ENCODE measurements at regions of chr12 and their contacts with region 1.

Region 1: DNA sequence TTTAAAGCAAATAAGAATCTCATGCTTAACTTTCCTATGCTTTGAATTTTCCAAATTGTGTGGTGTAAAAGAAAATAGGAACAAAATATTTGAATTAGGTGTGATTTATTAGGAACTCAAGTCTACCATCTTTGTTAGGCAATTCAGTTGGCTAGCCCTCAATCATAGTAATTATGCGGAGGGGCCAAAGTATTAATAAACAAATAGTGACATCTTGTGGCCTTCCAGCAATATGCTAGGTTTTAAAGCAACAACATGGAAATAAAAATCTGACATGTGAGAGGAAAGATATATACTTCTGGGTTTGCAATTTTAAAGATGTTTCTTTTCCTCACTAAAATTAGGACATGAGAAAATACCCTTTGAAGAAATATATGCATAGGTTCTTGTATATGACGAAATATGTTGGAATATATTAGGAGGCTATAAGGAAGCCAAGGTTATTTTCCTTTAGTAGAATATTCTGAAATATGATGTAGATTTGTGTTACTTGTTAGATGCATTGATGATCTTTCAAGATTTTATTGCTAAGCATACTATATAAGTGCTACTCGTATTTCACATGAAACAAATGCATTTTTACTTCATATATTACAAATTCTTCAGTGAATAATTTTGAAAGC is 200.4 kb downstream of the PTPRO start:
- DNase-seq: no peak
- ATAC-seq: no peak
- H3K4me3 Mint-ChIP-seq: no peak overlapping the region
- H3K27ac Mint-ChIP-seq: no peak overlapping the region
- H3K4me1 Mint-ChIP-seq: peaks cover 6% of the 10 kb centered on the region
- H3K27me3 Mint-ChIP-seq: peaks cover 26% of the 10 kb centered on the region

Region 2: GRCh38 chr12:15276088-15276698 is 246.5 kb before region 1 on chr12:
- CTCF ChIA-PET with region 1: interaction called, 19 read pairs
- POLR2A ChIA-PET with region 1: no interaction called
- DNase-seq: no peak
- ATAC-seq: no peak
- H3K4me3 Mint-ChIP-seq: no peak overlapping the region
- H3K27ac Mint-ChIP-seq: no peak overlapping the region
- H3K4me1 Mint-ChIP-seq: peaks cover 12% of the 10 kb centered on the region
- H3K27me3 Mint-ChIP-seq: peaks cover 9% of the 10 kb centered on the region

Region 3: GRCh38 chr12:15423629-15424028 is 99.0 kb before region 1 on chr12:
- CTCF ChIA-PET with region 1: no interaction called
- POLR2A ChIA-PET with region 1: no interaction called
- DNase-seq: no peak
- ATAC-seq: no peak
- H3K4me3 Mint-ChIP-seq: no peak overlapping the region
- H3K27ac Mint-ChIP-seq: no peak overlapping the region
- H3K4me1 Mint-ChIP-seq: no peaks in the 10 kb centered on the region
- H3K27me3 Mint-ChIP-seq: no peaks in the 10 kb centered on the region

Region 4: DNA sequence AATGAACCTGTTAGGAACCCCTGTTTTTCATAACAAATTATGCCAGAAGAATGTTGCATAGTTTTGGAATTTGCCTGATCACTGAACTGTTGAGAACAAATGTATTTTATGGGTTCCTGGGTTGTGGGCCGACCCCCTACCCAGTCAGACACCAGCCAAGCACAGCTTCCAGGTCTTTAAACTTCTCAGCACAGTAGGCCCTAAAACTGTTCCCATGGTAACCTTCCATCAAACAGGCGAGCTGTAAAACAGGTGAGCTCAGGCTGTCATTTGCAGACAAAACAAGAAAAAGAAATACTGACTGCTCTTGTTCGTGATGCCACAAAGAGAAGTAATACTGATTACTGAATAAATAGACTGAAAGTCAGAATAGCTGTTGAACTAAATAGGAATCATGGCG is 53.3 kb before region 1 on chr12:
- CTCF ChIA-PET with region 1: no interaction called
- POLR2A ChIA-PET with region 1: no interaction called
- DNase-seq: no peak
- ATAC-seq: no peak
- H3K4me3 Mint-ChIP-seq: no peak overlapping the region
- H3K27ac Mint-ChIP-seq: no peak overlapping the region
- H3K4me1 Mint-ChIP-seq: no peaks in the 10 kb centered on the region
- H3K27me3 Mint-ChIP-seq: peaks cover 11% of the 10 kb centered on the region

Measured in activated CD8-positive, alpha-beta T cell treated with anti-CD3 and anti-CD28 coated beads, Interleukin-2, amount 10 ng/mL, durations not matched to agents 7 days and 5 days (primary cell).